A673 (cell line): ENCODE measurements at regions of chr1 and their contacts with region 1.

Region 1: GRCh38 chr1:49163031-49163430 is 386.3 kb upstream of the BEND5 start:
- DNase-seq: no peak
- H3K4me3 ChIP-seq: no peak overlapping the region
- H3K27ac ChIP-seq: no peak overlapping the region
- H3K4me1 ChIP-seq: no peaks in the 10 kb centered on the region
- H3K27me3 ChIP-seq: no peaks in the 10 kb centered on the region
- CTCF ChIP-seq: no peak

Region 2: GRCh38 chr1:48999321-48999720 is 163.7 kb before region 1 on chr1:
- CTCF ChIA-PET with region 1: no interaction called
- POLR2A ChIA-PET with region 1: no interaction called
- intact Hi-C with region 1: loop called (anchors 5 kb)
- DNase-seq: no peak
- H3K4me3 ChIP-seq: no peak overlapping the region
- H3K27ac ChIP-seq: no peak overlapping the region
- H3K4me1 ChIP-seq: peaks cover 14% of the 10 kb centered on the region
- H3K27me3 ChIP-seq: no peaks in the 10 kb centered on the region
- CTCF ChIP-seq: no peak